Cardiac septum (tissue), 1 donor: ENCODE measurements at regions of chr19 and their contacts with region 1.

Region 1: DNA sequence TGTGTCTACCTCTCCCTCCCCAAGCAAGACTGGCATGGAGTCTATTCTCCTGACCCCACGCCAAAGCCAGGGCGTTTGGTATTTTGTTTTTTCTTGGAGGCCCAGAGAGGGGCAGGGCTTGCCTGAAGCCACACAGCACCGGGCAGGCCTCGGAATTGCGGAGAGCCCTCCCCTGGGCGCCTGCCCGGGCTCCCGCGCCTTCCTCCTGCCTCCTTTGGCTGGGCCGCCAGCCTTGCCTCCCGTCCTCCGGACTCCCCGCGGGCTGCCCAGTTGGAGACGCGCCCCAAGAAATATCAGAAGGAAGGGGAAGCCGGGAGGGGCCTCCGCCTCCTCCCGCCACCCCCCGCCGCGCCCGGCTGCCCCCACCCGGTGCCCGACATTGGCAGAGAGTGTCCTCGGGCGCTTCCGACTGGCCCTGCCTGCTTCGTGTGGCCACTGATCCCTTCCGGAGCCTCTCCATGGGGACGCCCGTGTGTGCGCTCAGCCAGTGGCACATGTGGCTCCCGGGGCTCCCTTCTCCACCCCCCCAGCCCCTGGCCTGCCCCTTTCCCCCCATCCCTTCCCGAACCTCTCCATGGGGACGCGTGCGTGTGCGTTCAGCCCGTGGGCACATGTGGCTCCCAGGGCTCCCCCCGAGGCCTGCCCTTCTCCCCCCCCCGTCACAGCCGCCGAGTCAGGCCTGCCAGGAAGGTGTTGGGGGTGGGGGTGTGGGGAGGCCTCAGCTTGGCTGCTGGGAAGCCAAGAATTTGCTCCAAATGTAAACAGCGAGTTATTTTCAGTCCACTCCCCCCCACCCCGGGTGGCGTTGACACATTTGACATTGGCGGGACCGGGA is 37.3 kb downstream of the NFIC start:
- DNase-seq: peak; percentile 93

Region 2: DNA sequence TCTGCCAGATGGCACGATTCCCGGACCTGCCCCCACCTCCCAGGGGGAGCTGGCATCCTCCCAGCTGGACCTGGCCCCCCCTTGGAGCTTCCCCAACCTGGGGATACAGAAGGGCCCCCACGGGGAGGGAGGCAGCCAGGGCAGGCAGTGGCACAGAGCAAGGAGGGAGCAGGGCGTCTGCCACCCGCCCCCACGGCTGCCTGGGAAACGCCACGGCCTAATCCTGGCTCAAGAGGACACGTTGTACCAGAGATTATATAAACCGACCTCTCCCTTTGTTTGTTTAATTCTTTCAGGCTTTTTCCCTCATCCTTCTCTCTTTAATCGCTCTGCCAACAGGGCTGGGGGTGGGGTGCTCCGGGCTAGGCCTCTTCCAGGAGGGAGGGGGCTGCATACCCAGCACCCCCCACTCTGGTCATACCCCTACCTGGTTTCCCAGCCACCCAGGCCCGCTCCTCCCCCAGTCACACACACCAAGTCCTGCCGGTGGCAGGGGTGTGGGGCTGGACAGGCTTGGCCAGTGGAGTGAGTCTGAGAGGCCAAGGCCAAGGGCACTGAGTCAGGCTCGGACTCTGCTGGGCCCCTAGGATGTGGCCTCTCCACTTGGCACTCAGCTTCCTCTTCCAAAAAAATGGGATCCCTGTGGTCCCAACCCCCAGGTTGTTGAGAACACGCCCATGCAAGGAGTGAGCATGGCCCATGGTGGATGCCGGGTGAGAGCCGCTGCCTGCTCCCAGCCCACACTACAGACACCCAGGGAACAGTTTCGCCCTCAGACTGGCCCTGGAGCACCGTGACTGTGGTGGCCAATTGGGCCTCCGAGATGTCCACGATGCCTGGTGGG is 66.8 kb before region 1 on chr19:
- intact Hi-C with region 1: loop called (anchors 1 kb)
- DNase-seq: peak; percentile 89

Region 3: DNA sequence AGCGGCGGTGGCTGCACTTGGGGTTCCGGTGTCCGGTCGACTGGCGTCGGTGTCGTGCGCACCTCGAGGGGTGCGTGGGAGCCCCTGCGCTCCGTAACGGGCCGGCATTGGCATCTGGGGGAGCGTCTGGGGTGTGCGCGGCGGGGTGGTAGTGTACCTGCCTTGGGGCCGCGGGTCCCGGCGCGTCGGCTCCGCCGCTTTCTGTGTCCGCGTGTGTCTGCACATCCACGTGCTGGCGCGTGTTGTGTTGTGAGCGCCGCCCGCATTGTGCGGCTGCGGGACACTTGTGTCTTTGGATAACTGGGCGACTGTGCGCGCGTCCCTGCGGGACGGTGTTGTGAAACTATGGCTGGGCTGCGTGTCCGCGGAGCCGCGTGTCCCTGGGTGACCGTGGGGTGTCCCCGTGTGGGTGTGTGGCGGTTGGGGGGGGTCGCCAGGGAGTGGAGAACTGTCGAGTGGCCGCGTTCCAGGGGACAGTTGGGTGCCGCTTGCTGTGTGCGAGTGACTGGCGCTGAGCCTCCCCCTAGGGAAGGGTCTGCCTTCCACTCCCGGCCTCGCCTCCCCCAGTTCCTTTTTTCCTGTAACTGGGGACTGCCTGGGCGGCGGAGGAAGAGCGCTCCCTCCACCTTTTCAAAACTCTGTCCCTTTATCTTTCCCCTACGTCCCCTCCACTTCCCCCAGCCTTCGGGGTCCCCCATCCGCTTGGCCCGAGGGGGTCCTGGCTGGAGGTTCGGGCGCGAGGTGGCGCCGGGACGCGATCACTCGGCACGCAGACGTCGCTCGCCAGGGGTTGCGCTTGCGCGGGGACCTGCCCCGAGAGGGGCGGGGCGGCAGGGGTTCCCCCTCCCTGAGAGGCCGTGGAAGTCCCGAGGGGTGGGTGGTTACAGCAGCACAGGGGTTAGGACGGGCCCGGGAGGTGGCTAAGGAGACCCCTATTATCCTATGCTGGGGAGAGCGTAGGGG is 43.0 kb before region 1 on chr19:
- intact Hi-C with region 1: loop called (anchors 2 kb)
- DNase-seq: peak; percentile 94

Region 4: GRCh38 chr19:3375221-3376090 is 28.2 kb before region 1 on chr19:
- intact Hi-C with region 1: loop called (anchors 1 kb)
- DNase-seq: peak; percentile 91

Region 5: DNA sequence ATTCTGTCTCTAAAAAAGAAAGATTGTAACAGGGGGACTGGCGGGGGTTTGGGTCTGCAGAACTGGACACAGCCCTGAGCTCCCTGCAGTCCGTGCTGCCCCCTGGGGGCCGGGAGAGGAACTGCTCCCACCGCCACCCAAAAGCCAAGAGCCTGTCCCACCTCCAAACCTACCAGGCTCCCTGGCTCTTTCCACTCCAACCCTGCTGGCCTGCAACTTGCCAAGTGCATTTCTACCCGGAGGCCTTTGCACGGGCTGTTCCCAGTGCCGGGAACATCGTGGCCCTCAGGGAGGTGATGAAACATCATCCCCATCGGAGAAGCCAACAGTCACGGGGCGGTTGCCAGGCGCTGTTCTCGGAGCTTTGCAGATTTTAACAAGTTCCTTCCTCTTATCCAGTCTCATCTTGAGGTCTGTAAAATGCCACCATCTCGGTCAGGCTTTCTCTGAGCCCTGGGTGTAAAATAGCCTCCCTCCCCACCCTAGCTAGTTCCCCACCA is 25.9 kb after region 1 on chr19:
- intact Hi-C with region 1: loop called (anchors 1 kb)
- DNase-seq: peak; percentile 94